ENCODE measurements at regions of chr19 and their contacts with region 1.

Region 1: DNA sequence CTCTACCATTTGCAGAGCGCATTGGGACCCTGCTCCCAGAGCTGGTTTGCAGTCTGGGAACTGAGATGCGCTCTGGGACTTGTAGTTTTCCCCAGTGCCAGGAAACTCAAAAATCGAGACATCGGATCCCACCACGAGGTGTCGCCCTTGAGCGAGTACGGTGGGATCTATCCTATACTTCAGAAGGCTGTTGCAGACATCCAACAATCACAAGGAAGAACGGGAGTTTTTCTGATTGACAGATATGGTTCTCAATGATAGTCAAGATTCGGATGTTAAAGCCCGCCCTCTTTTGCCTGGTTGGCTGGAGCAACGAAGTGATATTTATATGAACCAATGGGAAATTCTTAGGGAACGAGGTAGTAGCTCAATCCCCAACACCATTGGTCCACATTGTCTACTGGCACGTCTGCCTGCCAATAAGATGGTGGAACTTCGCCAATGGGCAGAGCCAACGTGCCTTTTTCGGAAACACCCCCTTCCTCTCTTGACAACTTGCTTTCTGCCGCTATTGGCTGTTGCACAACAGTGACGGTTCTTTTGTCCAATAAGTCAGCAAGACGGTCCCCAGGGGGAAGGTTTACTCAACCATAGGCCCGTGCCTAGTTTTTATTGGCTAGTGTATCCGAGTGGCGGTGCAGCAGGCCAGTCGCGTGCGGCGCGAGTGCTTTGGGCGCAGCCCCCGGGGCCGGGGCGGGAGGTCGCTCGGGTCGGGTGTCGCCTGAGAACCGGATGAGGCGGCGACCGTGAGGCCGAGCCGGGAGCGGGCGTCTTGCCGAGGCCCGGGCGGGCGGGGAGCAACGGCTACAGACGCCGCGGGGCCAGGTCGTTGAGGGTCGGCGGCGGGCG is at the start of gene DNM2:
- DNase-seq: peak; percentile 99
- H3K4me3 Mint-ChIP-seq: peak within 1 kb of the TSS; percentile 98
- H3K27ac Mint-ChIP-seq: peak within 1 kb of the TSS; percentile 88
- H3K4me1 Mint-ChIP-seq: peaks cover 29% of the 10 kb centered on the region
- H3K27me3 Mint-ChIP-seq: no peaks in the 10 kb centered on the region
- total RNA-seq, gene DNM2: 236 and 240 TPM in 2 replicates

Region 2: GRCh38 chr19:10321412-10321786 is 396.2 kb before region 1 on chr19:
- intact Hi-C with region 1: no loop called
- DNase-seq: no peak
- H3K4me3 Mint-ChIP-seq: no peak overlapping the region
- H3K27ac Mint-ChIP-seq: no peak overlapping the region
- H3K4me1 Mint-ChIP-seq: peaks cover 1% of the 10 kb centered on the region
- H3K27me3 Mint-ChIP-seq: no peaks in the 10 kb centered on the region

Region 3: GRCh38 chr19:10760273-10760944 is 42.8 kb after region 1 on chr19:
- intact Hi-C with region 1: loop called (anchors 1 kb)
- DNase-seq: no peak
- H3K4me3 Mint-ChIP-seq: peak overlapping the region; percentile 66
- H3K27ac Mint-ChIP-seq: peak overlapping the region; percentile 86
- H3K4me1 Mint-ChIP-seq: peaks cover 78% of the 10 kb centered on the region
- H3K27me3 Mint-ChIP-seq: no peaks in the 10 kb centered on the region

Region 4: DNA sequence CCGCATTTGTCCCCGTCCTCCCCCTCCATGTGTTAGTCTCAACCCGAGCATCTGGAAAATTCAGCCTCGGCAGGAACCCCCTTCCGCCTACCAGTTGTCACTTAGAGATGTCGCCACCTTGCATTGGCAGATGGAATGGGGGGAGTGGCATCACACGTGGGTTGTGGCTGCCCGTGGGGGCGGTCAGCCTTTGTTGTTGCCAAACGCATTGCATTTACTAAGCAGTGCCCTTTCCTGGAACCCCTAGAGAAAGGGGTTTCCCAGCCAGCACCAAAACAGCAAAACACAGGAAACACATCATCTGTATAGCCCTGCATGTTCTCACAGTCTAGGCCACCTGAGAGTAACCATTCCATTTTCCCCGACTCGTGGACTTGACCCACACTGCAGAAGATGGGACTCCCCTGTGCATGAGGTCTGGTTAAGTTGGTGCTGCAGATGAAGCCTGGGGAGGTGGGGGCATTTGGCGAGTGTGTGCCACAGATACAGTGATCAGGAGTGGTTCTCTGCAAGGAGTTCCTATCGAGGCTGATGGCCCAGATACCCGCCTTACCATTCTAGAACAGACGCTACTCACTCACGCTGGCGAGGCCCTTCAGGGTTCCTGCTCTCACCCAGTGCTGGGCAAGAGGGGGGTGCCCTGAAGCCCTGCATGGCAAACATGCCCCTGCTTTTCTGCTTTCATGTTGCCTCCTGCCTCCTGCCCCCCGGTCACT is 80.1 kb after region 1 on chr19:
- intact Hi-C with region 1: loop called (anchors 1 kb)
- DNase-seq: peak; percentile 92
- H3K4me3 Mint-ChIP-seq: peak overlapping the region; percentile 89
- H3K27ac Mint-ChIP-seq: peak overlapping the region; percentile 99
- H3K4me1 Mint-ChIP-seq: peaks cover 58% of the 10 kb centered on the region
- H3K27me3 Mint-ChIP-seq: no peaks in the 10 kb centered on the region

Region 5: GRCh38 chr19:10835754-10836477 is 118.3 kb after region 1 on chr19 and contains the start of gene TMED1:
- intact Hi-C with region 1: loop called (anchors 1 kb)
- DNase-seq: peak; percentile 93
- H3K4me3 Mint-ChIP-seq: peak within 1 kb of the TSS; percentile 92
- H3K27ac Mint-ChIP-seq: peak within 1 kb of the TSS; percentile 99
- H3K4me1 Mint-ChIP-seq: peaks cover 15% of the 10 kb centered on the region
- H3K27me3 Mint-ChIP-seq: peaks cover 4% of the 10 kb centered on the region
- total RNA-seq, gene TMED1: 19.8 and 21.0 TPM in 2 replicates

Region 6: DNA sequence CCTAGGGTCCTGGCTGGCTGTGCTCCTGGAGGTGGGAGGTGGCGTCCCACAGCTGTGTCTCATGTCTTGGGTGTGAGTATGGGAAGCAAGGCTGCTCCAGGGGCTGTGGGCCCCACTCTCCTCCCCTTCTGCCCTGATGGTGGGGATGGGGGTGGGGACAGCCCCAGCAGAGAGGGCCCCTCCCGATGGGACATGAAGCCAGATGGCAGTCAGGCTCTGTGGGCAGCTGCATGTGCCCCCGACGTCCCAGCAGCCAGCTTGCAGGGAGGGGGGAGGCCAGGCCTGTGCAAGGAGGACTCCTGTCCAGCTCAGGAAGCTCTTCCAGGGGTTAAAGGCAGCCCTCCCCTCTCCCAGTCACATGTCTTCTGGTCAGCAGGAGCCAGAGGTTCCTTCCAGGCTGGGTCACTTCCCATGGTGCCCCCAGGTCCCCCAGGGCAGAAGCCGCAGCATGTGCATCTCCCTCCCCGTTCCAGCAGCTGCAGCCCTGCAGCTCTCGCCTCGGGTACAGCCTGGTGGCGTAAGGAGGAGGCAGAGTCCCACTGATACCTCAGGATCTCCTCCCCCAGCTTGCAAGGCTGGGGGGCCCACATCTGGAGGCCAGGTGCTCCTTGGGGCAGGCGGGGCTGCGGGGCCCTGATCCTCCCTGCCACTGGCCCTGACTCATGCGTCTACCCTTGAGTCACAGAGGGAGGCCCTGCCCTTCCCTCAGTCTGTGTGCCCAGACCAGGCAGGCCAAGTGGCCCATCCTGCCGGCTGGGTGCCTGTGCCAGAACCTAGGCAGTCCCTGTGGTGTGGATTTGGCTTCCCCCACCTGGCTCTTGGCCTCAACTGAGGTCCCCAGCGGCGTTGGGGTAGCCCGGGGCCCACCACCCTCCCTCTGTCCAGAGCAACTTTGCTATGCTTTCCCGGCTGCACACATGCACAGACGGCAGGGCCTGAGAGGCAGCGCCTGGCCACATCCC is 197.8 kb after region 1 on chr19:
- intact Hi-C with region 1: no loop called
- DNase-seq: no peak
- H3K4me3 Mint-ChIP-seq: no peak overlapping the region
- H3K27ac Mint-ChIP-seq: no peak overlapping the region
- H3K4me1 Mint-ChIP-seq: no peaks in the 10 kb centered on the region
- H3K27me3 Mint-ChIP-seq: no peaks in the 10 kb centered on the region

Region 7: DNA sequence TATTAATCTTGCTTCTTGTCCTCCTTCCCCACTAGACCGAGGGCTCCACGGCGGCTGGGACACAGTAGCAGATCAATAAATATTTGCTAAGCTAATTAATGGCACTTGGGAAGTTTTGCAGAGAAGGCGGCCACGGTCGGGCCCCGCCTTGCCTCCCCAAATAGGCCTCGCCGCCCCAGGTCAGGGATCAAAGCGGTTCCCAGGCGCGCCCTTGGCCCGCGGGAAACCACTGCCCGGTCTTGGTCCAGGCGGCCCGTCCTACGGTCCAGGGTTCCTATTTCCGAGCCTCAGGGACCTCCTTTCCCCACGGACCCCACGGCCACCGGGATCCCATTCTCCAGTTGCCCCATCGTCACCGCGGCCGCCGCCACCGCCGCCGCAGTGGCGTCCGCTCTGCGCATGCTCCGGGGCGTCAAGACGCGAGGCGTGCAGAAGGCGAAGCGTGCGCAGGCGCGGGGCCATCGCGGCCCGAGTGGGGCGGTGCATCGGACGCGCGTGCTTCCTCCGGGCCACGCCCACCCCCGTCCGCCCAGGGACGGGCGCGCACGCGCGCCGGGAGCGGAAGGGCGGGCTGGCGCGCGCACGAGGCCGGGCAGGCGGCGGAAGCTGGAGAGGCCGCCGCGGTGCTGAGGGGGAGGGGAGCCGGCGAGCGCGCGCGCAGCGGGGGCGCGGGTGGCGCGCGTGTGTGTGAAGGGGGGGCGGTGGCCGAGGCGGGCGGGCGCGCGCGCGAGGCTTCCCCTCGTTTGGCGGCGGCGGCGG is 242.9 kb after region 1 on chr19 and contains the start of gene SMARCA4:
- intact Hi-C with region 1: loop called (anchors 5 kb)
- DNase-seq: peak; percentile 99
- H3K4me3 Mint-ChIP-seq: peak within 1 kb of the TSS; percentile 89
- H3K27ac Mint-ChIP-seq: peak within 1 kb of the TSS; percentile 87
- H3K4me1 Mint-ChIP-seq: peaks cover 39% of the 10 kb centered on the region
- H3K27me3 Mint-ChIP-seq: peaks cover under 1% of the 10 kb centered on the region
- total RNA-seq, gene SMARCA4: 177 and 178 TPM in 2 replicates

Measured in activated T-helper 1 cell treated with anti-CD3 and anti-CD28 coated beads, Interleukin-12 subunit alpha, Interleukin-12 subunit beta, Interleukin-2, Interleukin-4 antibody, amounts not matched to agents 30 ng/mL and 10 ng/mL and 1 ng/mL, durations not matched to agents 14 hours and 24 hours and 36 hours (primary cell).